A549 (cell line): ENCODE measurements at regions of chr11 and their contacts with region 1.

Region 1: GRCh38 chr11:662689-663274 is 25.7 kb downstream of the DRD4 start:
- DNase-seq: peak; percentile 70 to 96
- ATAC-seq: peak; percentile 92 to 94
- H3K4me3 ChIP-seq: no peak overlapping the region
- H3K27ac ChIP-seq: no peak overlapping the region
- H3K4me1 ChIP-seq: peaks cover 6% of the 10 kb centered on the region; the same call in 1 of the 3 replicates
- CTCF ChIP-seq: peak; percentile 75
- EP300 ChIP-seq: no peak
- POLR2A ChIP-seq: no peak
- RAD21 ChIP-seq: peak; percentile 70 to 81

Region 2: GRCh38 chr11:629237-629583 is 33.6 kb before region 1 on chr11:
- CTCF ChIA-PET with region 1: no interaction called
- POLR2A ChIA-PET with region 1: no interaction called
- DNase-seq: no peak
- ATAC-seq: no peak
- H3K4me3 ChIP-seq: no peak overlapping the region
- H3K27ac ChIP-seq: peak overlapping the region in 1 of 2 experiments; percentile 60; a peak in 4 of 6 replicates
- H3K4me1 ChIP-seq: peaks cover 17% of the 10 kb centered on the region
- CTCF ChIP-seq: no peak
- EP300 ChIP-seq: no peak
- POLR2A ChIP-seq: no peak
- RAD21 ChIP-seq: no peak

Region 3: GRCh38 chr11:674406-674805 is 11.6 kb after region 1 on chr11:
- CTCF ChIA-PET with region 1: interaction called, 26 read pairs
- POLR2A ChIA-PET with region 1: no interaction called
- DNase-seq: no peak
- ATAC-seq: no peak
- H3K4me3 ChIP-seq: no peak overlapping the region
- H3K27ac ChIP-seq: no peak overlapping the region
- H3K4me1 ChIP-seq: no peaks in the 10 kb centered on the region
- CTCF ChIP-seq: no peak
- EP300 ChIP-seq: no peak
- POLR2A ChIP-seq: no peak
- RAD21 ChIP-seq: no peak

Region 4: GRCh38 chr11:680476-680875 is 17.7 kb after region 1 on chr11:
- CTCF ChIA-PET with region 1: interaction called, 12 read pairs
- POLR2A ChIA-PET with region 1: no interaction called
- DNase-seq: no peak
- ATAC-seq: peak in 1 of 2 experiments; percentile 19; a peak in 1 of 6 replicates
- H3K4me3 ChIP-seq: no peak overlapping the region
- H3K27ac ChIP-seq: no peak overlapping the region
- H3K4me1 ChIP-seq: no peaks in the 10 kb centered on the region
- CTCF ChIP-seq: no peak
- EP300 ChIP-seq: no peak
- POLR2A ChIP-seq: no peak
- RAD21 ChIP-seq: no peak